Heart left ventricle (tissue), 16 donors: ENCODE measurements at regions of chr6 and their contacts with region 1.

Region 1: GRCh38 chr6:130749402-130749801 is 77.8 kb upstream of the SMLR1 start:
- DNase-seq: no peak
- ATAC-seq: no peak
- H3K4me3 ChIP-seq: no peak overlapping the region
- H3K27ac ChIP-seq: no peak overlapping the region
- H3K4me1 ChIP-seq: no peaks in the 10 kb centered on the region
- H3K27me3 ChIP-seq: no peaks in the 10 kb centered on the region
- CTCF ChIP-seq: no peak
- POLR2A ChIP-seq: no peak

Region 2: DNA sequence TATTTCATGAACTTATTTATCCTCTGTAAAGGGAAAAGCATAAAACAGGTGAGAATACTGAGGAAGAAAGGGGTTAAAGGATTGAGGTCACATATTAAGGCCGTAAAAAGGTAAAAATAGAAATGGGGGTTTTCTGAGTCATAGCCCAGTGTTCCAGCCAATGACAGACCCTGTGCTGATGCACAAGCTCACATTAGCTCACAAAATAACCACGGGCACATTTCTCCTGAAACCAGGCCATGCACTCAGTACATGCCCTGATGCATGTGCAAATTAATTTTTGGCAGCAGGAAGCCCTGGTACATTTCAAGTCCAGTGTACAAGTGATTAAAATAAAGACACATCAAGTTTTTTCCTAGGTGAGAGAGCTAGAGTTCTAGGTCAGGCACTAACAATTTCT is 189.2 kb before region 1 on chr6:
- intact Hi-C with region 1: no loop called
- DNase-seq: no peak
- ATAC-seq: no peak
- H3K4me3 ChIP-seq: no peak overlapping the region
- H3K27ac ChIP-seq: no peak overlapping the region
- H3K4me1 ChIP-seq: no peaks in the 10 kb centered on the region
- H3K27me3 ChIP-seq: no peaks in the 10 kb centered on the region
- CTCF ChIP-seq: no peak
- POLR2A ChIP-seq: no peak

Region 3: GRCh38 chr6:130683761-130684517 is 65.5 kb before region 1 on chr6:
- intact Hi-C with region 1: loop called in 1 of 10 experiments (anchors 2 kb)
- DNase-seq: no peak
- ATAC-seq: no peak
- H3K4me3 ChIP-seq: no peak overlapping the region
- H3K27ac ChIP-seq: no peak overlapping the region
- H3K4me1 ChIP-seq: peaks cover 0 to 12% (median 0%) of the 10 kb centered on the region in 12 donors
- H3K27me3 ChIP-seq: no peaks in the 10 kb centered on the region
- CTCF ChIP-seq: no peak
- POLR2A ChIP-seq: no peak

Region 4: DNA sequence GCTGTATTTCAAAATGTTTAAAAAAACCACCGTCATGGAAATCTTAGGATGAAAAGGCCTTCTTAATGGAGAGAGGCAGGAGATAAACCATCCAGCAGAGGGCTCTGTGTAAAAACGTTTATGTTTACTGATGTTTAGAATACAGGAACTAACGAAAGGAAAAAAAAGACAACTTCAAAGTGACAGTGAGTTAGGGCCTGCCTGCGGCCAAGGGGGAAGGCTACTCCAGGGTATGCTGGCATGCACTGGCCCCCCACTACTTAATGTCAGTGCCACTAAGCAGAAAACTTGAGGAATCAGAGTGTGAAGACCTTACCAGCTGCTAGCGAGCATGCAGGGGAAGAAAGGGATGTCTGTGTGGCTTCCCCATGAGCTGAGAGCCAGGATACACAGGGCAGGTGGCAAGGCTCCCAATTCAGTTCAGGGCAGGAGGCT is 433.6 kb after region 1 on chr6:
- intact Hi-C with region 1: no loop called
- DNase-seq: no peak
- ATAC-seq: no peak
- H3K4me3 ChIP-seq: no peak overlapping the region
- H3K27ac ChIP-seq: no peak overlapping the region
- H3K4me1 ChIP-seq: peaks cover 0 to 4% (median 0%) of the 10 kb centered on the region in 12 donors
- H3K27me3 ChIP-seq: no peaks in the 10 kb centered on the region
- CTCF ChIP-seq: peak in 10 of 12 donors; percentile 8 to 50 (median 32)
- POLR2A ChIP-seq: no peak